ENCODE measurements at regions of chr5 and their contacts with region 1.

Region 1: GRCh38 chr5:179404321-179405053 is 59.2 kb upstream of the ADAMTS2 start:
- DNase-seq: peak; percentile 10
- H3K4me3 Mint-ChIP-seq: no peak overlapping the region
- H3K27ac Mint-ChIP-seq: no peak overlapping the region
- H3K4me1 Mint-ChIP-seq: no peaks in the 10 kb centered on the region
- H3K27me3 Mint-ChIP-seq: no peaks in the 10 kb centered on the region
- CTCF ChIP-seq: peak; percentile 61

Region 2: DNA sequence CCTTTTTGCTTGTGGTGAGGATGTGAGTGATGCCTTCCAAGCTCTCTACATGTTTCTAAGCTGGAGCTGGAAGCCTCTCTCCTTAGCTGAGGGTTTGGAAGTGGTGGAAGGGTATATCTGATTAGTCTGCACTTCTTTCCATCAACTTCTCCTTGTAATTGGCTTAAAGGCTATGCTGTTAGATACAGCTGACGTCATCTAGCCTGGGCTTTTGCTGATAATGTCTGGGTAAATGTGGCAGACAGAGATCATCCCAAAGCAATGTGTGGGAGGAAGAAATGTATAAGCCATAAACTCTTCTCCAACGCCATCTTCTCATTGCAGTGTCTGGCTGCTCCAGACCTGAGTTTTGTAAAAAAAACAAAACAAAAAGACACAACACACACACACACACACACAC is 315.0 kb before region 1 on chr5:
- CTCF ChIA-PET with region 1: no interaction called
- POLR2A ChIA-PET with region 1: no interaction called
- intact Hi-C with region 1: loop called (anchors 10 kb)
- DNase-seq: no peak
- H3K4me3 Mint-ChIP-seq: no peak overlapping the region
- H3K27ac Mint-ChIP-seq: no peak overlapping the region
- H3K4me1 Mint-ChIP-seq: no peaks in the 10 kb centered on the region
- H3K27me3 Mint-ChIP-seq: no peaks in the 10 kb centered on the region
- CTCF ChIP-seq: no peak

Region 3: GRCh38 chr5:179166886-179167841 is 237.3 kb before region 1 on chr5:
- CTCF ChIA-PET with region 1: interaction called, 20 read pairs
- POLR2A ChIA-PET with region 1: interaction called, 3 read pairs
- intact Hi-C with region 1: no loop called
- DNase-seq: no peak
- H3K4me3 Mint-ChIP-seq: no peak overlapping the region
- H3K27ac Mint-ChIP-seq: no peak overlapping the region
- H3K4me1 Mint-ChIP-seq: no peaks in the 10 kb centered on the region
- H3K27me3 Mint-ChIP-seq: no peaks in the 10 kb centered on the region
- CTCF ChIP-seq: peak; percentile 74

Region 4: GRCh38 chr5:179275941-179276837 is 128.3 kb before region 1 on chr5:
- CTCF ChIA-PET with region 1: no interaction called
- POLR2A ChIA-PET with region 1: no interaction called
- intact Hi-C with region 1: loop called (anchors 10 kb)
- DNase-seq: peak; percentile 72
- H3K4me3 Mint-ChIP-seq: no peak overlapping the region
- H3K27ac Mint-ChIP-seq: peak overlapping the region; percentile 47
- H3K4me1 Mint-ChIP-seq: peaks cover 7% of the 10 kb centered on the region
- H3K27me3 Mint-ChIP-seq: no peaks in the 10 kb centered on the region
- CTCF ChIP-seq: no peak

Measured in MCF 10A (cell line).